Esophagus muscularis mucosa (tissue), 4 donors: ENCODE measurements at regions of chr1 and their contacts with region 1.

Region 1: DNA sequence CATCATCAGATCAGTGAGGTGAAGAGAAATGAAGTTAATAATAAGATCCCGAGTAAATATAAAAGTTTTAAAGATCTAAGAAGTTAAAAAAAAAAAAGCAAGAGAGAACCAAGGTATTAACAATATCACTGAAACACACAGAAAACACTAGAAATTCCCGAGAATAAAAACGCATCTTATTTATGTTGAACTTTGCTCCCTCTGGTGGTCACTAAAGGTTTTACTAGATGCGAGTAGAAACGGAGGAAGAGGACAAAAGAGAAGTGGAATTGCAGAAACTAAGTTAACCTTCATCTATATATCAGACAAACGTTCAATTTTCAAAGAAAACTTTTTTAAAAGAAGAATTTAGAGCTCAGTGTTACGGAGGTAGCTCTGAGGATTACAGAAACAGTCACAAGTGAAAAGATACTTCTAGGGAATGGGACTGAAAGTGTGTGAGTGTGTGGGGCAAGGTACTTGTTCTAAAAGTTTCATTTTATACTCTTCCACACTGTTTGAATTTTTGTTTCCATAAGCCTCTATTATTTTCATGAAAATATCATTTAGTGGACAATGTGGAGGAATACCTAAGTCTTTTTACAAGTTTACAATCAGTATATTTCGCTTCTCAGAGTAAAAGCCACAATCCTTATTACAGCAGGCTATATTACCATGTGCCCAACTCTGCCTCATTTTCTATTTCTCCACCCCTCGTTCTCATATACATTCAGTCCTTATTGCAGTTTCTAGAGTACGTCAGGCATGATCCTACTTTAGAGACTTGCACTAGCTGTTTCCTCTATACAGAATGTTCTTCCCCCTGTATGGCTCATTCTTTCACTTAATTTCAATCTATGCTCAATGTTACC is 19.7 kb downstream of the ACBD6 start:
- DNase-seq: no peak
- H3K4me3 ChIP-seq: no peak overlapping the region
- H3K27ac ChIP-seq: no peak overlapping the region
- H3K4me1 ChIP-seq: peaks cover 0 to 9% (median 7%) of the 10 kb centered on the region in 4 donors
- H3K27me3 ChIP-seq: no peaks in the 10 kb centered on the region
- CTCF ChIP-seq: peak; percentile 61 to 77 (median 62)
- EP300 ChIP-seq: no peak
- POLR2A ChIP-seq: no peak

Region 2: GRCh38 chr1:180188091-180188506 is 294.6 kb before region 1 on chr1:
- intact Hi-C with region 1: loop called (anchors 5 kb)
- DNase-seq: no peak
- H3K4me3 ChIP-seq: no peak overlapping the region
- H3K27ac ChIP-seq: no peak overlapping the region
- H3K4me1 ChIP-seq: no peaks in the 10 kb centered on the region
- H3K27me3 ChIP-seq: no peaks in the 10 kb centered on the region
- CTCF ChIP-seq: peak; percentile 39 to 62 (median 46)
- EP300 ChIP-seq: no peak
- POLR2A ChIP-seq: no peak

Region 3: DNA sequence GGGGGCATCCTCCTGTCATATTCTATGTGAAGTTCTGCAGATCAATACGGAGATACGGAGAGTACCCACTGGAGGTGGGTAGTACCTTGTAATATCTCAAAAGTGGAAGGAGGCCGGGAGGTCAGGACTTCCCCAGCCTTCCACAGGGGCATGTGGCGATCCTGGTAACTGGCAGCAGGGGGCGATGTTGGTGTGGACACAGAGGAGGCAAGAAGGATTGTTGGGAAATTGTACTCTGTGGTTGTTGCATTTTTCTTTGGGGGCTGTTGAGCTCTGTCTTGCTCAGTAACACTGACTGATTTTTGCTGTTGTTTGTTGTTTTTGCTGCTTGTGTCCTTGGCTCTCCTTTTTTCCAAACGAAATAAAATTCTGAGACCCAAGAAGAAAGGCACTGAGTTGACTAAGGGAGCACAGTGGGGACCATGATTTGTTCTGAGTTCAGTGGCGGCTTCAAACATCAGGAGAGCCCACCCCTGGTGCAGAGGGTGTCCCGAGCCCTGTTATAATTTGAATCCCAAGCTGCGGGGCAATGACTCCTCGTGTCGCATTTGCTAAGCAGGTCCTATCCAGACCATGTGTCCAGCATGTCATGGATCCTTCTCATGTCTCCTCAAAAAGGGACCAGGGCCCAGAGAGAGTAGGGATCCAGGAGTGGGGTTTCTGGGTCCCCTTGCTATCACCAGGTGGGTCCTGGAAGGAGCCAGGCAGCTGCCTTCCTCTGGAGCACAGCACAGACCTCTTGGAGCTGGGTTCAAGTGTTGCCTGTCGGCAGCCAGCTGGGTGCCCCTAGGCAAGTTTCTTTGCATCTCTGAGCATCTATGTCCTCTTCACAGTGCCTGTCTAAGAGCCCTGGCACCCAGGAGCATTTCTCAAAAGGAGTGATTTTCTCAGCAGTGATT is 229.8 kb before region 1 on chr1:
- intact Hi-C with region 1: loop called (anchors 5 kb)
- DNase-seq: no peak
- H3K4me3 ChIP-seq: no peak overlapping the region
- H3K27ac ChIP-seq: no peak overlapping the region
- H3K4me1 ChIP-seq: no peaks in the 10 kb centered on the region
- H3K27me3 ChIP-seq: peaks cover 0 to 85% (median 17%) of the 10 kb centered on the region in 4 donors
- CTCF ChIP-seq: peak; percentile 53 to 67 (median 59)
- EP300 ChIP-seq: no peak
- POLR2A ChIP-seq: no peak